ENCODE measurements at regions of chr1 and their contacts with region 1.

Region 1: GRCh38 chr1:225777583-225778336 is at the start of gene SRP9:
- DNase-seq: peak; percentile 99
- ATAC-seq: peak; percentile 100
- H3K4me3 ChIP-seq: peak within 1 kb of the TSS; percentile 85
- H3K27ac ChIP-seq: peak within 1 kb of the TSS; percentile 97
- H3K4me1 ChIP-seq: peaks cover 49% of the 10 kb centered on the region
- H3K27me3 ChIP-seq: no peaks in the 10 kb centered on the region
- CTCF ChIP-seq: peak; percentile 92
- total RNA-seq, gene SRP9: 157 TPM

Region 2: GRCh38 chr1:225554216-225554812 is 223.4 kb before region 1 on chr1:
- intact Hi-C with region 1: loop called (anchors 10 kb)
- DNase-seq: no peak
- ATAC-seq: peak; percentile 60
- H3K4me3 ChIP-seq: no peak overlapping the region
- H3K27ac ChIP-seq: no peak overlapping the region
- H3K4me1 ChIP-seq: peaks cover 5% of the 10 kb centered on the region
- H3K27me3 ChIP-seq: no peaks in the 10 kb centered on the region
- CTCF ChIP-seq: peak; percentile 75

Region 3: GRCh38 chr1:226034482-226034881 is 256.7 kb after region 1 on chr1:
- intact Hi-C with region 1: no loop called
- DNase-seq: peak; percentile 85
- ATAC-seq: peak; percentile 94
- H3K4me3 ChIP-seq: no peak overlapping the region
- H3K27ac ChIP-seq: peak overlapping the region; percentile 77
- H3K4me1 ChIP-seq: peaks cover 15% of the 10 kb centered on the region
- H3K27me3 ChIP-seq: no peaks in the 10 kb centered on the region
- CTCF ChIP-seq: no peak